ENCODE measurements at regions of chr6 and their contacts with region 1.

Region 1: GRCh38 chr6:112163295-112164257 is 76.2 kb downstream of the FAM229B start:
- DNase-seq: peak; percentile 82
- H3K4me3 Mint-ChIP-seq: peak overlapping the region; percentile 34
- H3K27ac Mint-ChIP-seq: peak overlapping the region; percentile 21
- H3K4me1 Mint-ChIP-seq: peaks cover 19% of the 10 kb centered on the region
- H3K27me3 Mint-ChIP-seq: peaks cover 37% of the 10 kb centered on the region

Region 2: DNA sequence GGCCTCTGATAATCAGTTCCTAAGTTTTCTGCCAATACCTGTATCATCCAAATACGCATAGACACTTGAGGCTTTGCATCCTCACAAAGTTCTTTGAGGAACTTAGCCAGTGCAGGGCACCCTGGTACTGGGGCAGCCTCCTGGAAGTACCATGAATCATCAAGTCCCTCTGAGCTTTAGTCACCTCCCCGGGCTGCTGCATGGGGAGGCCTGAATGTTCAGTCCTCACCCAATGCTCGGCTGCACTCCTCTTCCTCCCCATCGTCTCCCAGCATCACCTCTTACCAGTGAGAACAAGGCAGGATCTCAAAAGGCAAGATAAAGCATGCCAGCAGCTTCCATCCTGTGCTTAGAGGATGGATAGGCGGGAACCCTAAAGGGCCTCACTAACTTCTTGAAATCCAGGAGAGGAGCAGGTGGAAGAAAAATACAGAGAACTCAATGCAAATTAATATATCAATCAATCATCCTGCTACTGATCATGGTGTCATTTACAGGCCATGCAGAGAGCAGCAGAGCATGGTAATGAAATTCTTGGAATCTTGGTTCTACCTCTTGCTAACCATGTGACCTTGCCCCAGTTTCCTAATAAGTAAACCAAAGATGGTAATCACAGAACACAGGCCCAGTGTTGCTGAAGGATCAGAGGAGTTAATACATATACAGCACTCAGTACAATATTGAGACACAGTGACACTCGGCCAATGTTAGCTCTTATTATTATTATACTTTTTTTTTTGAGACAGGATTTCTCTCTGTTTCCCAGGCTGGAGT is 114.4 kb before region 1 on chr6:
- CTCF ChIA-PET with region 1: interaction called, 18 read pairs
- DNase-seq: no peak
- H3K4me3 Mint-ChIP-seq: no peak overlapping the region
- H3K27ac Mint-ChIP-seq: peak overlapping the region; percentile 42
- H3K4me1 Mint-ChIP-seq: no peaks in the 10 kb centered on the region
- H3K27me3 Mint-ChIP-seq: peaks cover 4% of the 10 kb centered on the region

Region 3: DNA sequence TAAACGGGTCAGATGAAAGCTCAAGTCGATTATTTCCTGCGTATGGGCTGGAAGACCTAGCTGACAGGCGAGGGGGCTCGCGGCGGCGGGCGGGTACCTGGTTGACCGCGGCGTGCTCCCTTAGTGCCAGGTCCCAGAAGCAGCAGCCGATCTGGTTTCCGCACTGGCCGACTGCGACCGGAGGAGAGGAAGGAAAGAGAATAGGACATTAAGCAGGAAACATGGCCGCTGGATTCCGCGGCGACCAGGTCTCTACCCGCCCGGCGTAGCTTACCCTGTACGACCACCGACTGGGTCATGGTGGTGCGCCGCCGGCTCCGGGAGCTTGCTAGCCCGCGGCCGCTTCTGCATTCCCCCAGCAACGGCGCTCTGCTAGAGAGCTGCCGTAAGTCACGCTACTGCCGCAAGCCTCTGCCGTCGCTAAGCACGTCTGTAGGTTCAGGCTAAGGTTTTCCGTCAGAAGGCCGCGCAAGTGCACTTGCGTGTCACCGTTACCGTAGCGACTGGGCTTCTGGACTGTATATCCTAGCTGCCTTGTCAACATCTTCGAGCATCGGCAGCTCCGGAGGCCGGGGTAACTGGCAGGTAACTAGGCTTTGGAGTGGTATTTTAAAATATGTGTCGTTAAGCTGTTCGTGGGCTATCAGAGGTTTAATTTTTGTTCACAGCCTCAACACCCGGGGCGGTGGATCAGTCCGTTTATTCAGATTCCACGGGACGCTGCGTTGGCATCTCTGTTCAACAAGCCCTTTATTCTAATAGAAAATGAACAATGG is 76.3 kb before region 1 on chr6 and contains the starts of genes FAM229B and TUBE1:
- CTCF ChIA-PET with region 1: interaction called, 97 read pairs
- DNase-seq: peak; percentile 94
- H3K4me3 Mint-ChIP-seq: no peak within 1 kb of the TSS
- H3K27ac Mint-ChIP-seq: no peak within 1 kb of the TSS
- H3K4me1 Mint-ChIP-seq: peaks cover 11% of the 10 kb centered on the region
- H3K27me3 Mint-ChIP-seq: peaks cover 8% of the 10 kb centered on the region

Region 4: DNA sequence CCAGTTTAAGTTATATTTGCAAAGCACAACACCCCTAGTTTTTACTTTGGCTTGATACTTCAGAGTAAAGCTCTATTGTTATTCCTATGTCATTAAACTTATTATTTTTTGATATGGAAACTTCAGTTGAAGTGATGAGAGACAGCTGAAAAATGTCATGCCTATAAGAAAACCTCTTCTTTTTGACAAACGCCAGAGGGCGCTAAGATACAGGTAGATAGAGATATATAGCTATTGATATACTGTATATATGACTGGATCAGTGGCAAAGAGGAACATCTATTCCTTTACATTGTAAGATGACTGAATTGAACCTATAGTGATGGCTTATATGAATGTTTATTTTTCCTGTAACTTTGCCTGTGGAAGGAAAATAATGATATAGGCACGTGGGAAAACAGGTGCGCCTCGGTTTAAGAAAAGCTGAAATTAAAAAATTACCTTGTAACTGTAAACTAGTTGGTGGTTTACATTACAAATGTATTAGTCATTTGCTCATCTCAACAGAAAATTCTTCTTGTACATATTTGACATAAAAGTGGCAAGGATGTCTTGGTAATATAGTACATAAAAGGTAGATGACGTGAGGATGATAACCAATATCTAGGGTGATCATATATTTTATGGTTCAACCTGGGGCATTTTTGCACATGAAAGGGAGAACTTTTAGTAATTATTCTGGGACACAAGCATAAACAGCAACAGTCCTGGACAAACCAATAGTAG is 16.7 kb after region 1 on chr6:
- CTCF ChIA-PET with region 1: interaction called, 21 read pairs
- DNase-seq: peak; percentile 59
- H3K4me3 Mint-ChIP-seq: no peak overlapping the region
- H3K27ac Mint-ChIP-seq: no peak overlapping the region
- H3K4me1 Mint-ChIP-seq: no peaks in the 10 kb centered on the region
- H3K27me3 Mint-ChIP-seq: peaks cover 16% of the 10 kb centered on the region

Region 5: DNA sequence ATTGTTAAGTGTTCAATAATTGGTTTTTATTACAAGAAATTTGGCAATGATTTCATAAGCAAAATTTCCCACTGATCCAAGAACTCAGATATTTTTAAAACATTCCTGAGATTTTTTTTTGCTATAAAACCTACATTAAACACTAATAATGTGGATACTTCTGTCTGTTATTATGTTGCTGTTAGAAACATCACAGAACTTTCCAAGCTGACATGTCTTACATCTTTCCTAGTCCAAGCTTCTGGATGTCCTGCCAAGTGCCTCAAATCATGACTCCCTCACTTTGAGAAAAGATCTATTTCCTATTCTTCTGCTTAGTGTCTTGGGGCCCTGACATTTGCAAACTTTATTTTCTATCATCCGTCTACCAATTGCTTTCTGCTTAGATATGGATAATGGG is 294.3 kb after region 1 on chr6:
- CTCF ChIA-PET with region 1: no interaction called
- DNase-seq: no peak
- H3K4me3 Mint-ChIP-seq: no peak overlapping the region
- H3K27ac Mint-ChIP-seq: no peak overlapping the region
- H3K4me1 Mint-ChIP-seq: no peaks in the 10 kb centered on the region
- H3K27me3 Mint-ChIP-seq: no peaks in the 10 kb centered on the region

Measured in activated naive CD4-positive, alpha-beta T cell treated with anti-CD3 and anti-CD28 coated beads, Interleukin-2, amount 10 ng/mL, durations not matched to agents 7 days and 5 days (primary cell).